K562 (cell line): ENCODE measurements at regions of chr3 and their contacts with region 1.

Region 1: DNA sequence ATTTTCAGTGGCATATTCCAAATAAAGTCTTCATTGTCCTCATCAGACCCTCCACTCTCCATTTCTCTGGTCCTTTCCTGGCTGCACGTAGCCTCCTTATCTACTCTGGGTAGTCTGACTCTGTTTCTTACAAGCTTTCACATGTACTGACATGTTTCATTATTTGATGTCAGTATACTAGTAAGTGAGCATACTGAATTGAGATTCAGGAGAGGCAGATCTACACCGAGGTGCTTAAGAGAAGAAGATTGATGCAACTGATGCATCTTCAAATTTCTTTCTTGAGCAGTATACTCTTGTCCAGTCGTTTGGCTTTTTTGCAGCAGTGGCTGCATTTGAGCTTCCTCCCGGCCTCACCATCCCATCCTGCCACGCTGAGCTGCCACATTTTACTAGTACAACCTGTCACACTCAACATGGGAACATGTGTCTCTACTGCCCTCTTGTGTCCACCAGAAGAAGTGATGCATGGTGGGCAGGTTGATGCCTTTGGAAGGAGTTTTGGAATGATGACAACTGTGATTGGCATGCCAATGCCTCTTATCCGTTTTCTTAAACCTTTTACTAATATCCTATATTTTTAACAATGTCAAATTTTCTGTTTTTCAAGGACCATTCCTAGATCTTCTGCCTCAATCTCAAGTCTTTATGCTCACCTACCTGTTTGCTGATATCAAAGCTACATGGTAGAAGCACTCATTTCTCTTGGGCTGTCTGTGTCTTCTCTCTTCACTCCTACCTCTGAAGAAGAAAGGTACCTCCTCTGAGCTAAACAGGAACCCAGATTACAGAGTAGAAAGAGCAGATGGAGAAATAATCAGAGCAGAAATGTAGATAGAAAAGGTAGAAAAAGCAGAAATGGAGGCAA is 38.7 kb downstream of the GUCA1C start:
- DNase-seq: peak; percentile 29 to 57 (median 54)
- ATAC-seq: peak; percentile 86
- H3K4me3 ChIP-seq: no peak overlapping the region
- H3K27ac ChIP-seq: no peak overlapping the region
- H3K4me1 ChIP-seq: no peaks in the 10 kb centered on the region
- H3K27me3 ChIP-seq: no peaks in the 10 kb centered on the region
- CTCF ChIP-seq: peak; percentile 57 to 71 (median 63)
- EP300 ChIP-seq: no peak
- POLR2A ChIP-seq: no peak
- RAD21 ChIP-seq: peak; percentile 65 to 73

Region 2: DNA sequence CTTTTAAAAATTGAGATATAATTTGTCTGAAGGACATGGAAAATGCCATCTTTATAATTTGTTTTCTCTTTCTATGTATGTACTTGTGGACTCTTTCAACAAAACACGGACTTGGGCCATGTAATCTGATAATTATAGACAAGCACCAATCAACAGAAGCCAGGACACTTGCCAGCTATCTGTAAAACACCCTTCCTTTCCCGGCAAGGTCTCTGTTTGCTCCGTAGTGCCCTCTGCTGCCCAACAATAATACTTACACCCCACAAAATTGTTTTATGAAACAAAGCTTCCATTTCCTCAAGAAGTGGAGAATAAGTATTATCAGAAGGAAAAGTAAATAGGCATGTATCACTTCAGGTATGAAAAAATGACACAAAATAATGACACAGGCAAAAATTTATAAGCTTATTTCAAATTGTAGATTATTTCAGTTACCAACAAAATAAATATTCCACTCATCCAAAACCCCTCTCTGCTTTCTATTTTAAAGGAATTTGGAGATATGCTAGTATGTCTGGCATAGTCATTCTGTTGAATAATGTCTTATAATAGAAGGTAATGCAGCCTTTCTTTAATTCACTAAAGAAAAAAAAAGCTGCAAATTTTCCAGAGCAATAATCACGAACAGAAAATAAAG is 437.4 kb before region 1 on chr3:
- CTCF ChIA-PET with region 1: no interaction called
- POLR2A ChIA-PET with region 1: no interaction called
- in situ Hi-C with region 1: loop called (anchors 25 kb)
- intact Hi-C with region 1: no loop called
- DNase-seq: peak; percentile 35 to 62 (median 42)
- ATAC-seq: peak; percentile 82
- H3K4me3 ChIP-seq: no peak overlapping the region
- H3K27ac ChIP-seq: no peak overlapping the region
- H3K4me1 ChIP-seq: no peaks in the 10 kb centered on the region
- H3K27me3 ChIP-seq: no peaks in the 10 kb centered on the region
- CTCF ChIP-seq: peak; percentile 59 to 73 (median 61)
- EP300 ChIP-seq: no peak
- POLR2A ChIP-seq: no peak
- RAD21 ChIP-seq: peak; percentile 41 to 78

Region 3: GRCh38 chr3:109033000-109033660 is 118.1 kb after region 1 on chr3:
- CTCF ChIA-PET with region 1: no interaction called
- POLR2A ChIA-PET with region 1: no interaction called
- in situ Hi-C with region 1: no loop called
- intact Hi-C with region 1: no loop called
- DNase-seq: no peak
- ATAC-seq: no peak
- H3K4me3 ChIP-seq: no peak overlapping the region
- H3K27ac ChIP-seq: no peak overlapping the region
- H3K4me1 ChIP-seq: no peaks in the 10 kb centered on the region
- H3K27me3 ChIP-seq: no peaks in the 10 kb centered on the region
- CTCF ChIP-seq: no peak
- EP300 ChIP-seq: no peak
- POLR2A ChIP-seq: no peak
- RAD21 ChIP-seq: no peak

Region 4: DNA sequence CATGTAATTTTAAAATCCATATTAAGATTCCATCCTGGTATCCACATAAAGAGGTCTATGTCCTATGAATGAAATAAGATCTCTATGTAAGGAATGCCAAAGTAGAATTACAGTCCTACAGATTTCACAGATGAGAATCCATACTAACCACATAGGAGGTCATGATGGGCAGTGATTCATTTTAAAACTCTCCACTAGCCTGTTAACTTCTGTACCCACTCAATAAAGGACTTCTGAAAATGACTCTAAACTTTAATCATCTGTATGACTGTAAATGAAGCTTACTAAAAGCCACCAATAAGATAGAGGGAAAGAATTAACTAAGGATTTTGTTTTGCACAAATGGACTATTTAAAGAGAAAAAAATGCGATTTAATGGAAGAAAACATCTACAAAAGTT is 174.3 kb after region 1 on chr3:
- CTCF ChIA-PET with region 1: no interaction called
- POLR2A ChIA-PET with region 1: no interaction called
- in situ Hi-C with region 1: no loop called
- intact Hi-C with region 1: no loop called
- DNase-seq: no peak
- ATAC-seq: no peak
- H3K4me3 ChIP-seq: no peak overlapping the region
- H3K27ac ChIP-seq: no peak overlapping the region
- H3K4me1 ChIP-seq: no peaks in the 10 kb centered on the region
- H3K27me3 ChIP-seq: no peaks in the 10 kb centered on the region
- CTCF ChIP-seq: no peak
- EP300 ChIP-seq: no peak
- POLR2A ChIP-seq: no peak
- RAD21 ChIP-seq: no peak